Activated CD8-positive, alpha-beta memory T cell treated with anti-CD3 and anti-CD28 coated beads, Interleukin-2, amount 10 ng/mL, durations not matched to agents 7 days and 5 days (primary cell): ENCODE measurements at regions of chr7 and their contacts with region 1.

Region 1: GRCh38 chr7:104923010-104923421 is 91.0 kb upstream of the KMT2E start:
- DNase-seq: peak; percentile 89
- ATAC-seq: peak; percentile 99
- H3K4me3 Mint-ChIP-seq: no peak overlapping the region
- H3K27ac Mint-ChIP-seq: peak overlapping the region; percentile 73
- H3K4me1 Mint-ChIP-seq: peaks cover 7% of the 10 kb centered on the region
- H3K27me3 Mint-ChIP-seq: peaks cover 3% of the 10 kb centered on the region

Region 2: DNA sequence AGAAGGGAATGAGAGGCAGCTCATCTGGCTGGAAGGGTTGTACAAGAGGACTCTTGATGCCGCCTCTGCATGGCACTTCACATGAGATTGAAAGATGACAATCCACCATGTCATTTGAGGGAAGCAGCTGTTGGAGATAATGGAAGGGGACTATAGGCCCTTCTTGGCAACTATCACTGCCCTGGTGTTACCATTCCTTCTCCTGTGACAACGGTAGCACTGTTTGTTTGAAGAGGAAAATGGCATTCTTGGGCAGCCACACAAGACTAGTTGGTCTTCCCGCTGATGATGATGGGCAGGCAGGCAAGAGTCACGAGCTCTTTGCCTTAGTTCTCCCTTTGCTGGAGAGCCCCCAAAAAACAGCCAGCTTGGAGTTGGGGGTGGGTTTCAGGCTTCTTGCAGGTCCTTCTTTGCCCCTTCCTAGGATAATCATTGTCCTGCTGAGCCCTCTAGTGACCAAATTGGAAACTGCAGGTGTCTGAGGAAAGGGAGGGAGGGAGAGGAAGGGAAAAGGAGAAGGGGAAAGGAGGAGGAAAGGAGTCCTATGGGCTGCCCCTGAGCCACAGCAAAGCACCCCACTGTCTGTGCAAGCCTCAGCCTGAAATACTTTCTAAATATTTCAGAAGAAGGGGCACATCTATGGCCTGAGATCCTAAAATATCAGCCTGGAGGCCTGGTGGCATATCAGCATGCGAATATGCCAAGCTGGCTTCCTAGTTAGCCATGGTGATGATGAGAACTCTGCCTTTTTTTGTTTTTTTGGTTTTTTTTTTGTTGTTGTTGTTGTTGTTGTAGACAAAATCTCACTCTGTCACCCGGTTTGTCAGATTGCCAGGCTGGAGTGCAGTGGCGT is 74.7 kb before region 1 on chr7:
- CTCF ChIA-PET with region 1: interaction called, 11 read pairs
- DNase-seq: peak; percentile 61
- ATAC-seq: peak; percentile 55
- H3K4me3 Mint-ChIP-seq: no peak overlapping the region
- H3K27ac Mint-ChIP-seq: no peak overlapping the region
- H3K4me1 Mint-ChIP-seq: no peaks in the 10 kb centered on the region
- H3K27me3 Mint-ChIP-seq: peaks cover 24% of the 10 kb centered on the region

Region 3: GRCh38 chr7:104883718-104884452 is 39.1 kb before region 1 on chr7:
- CTCF ChIA-PET with region 1: interaction called, 103 read pairs
- DNase-seq: peak; percentile 74
- ATAC-seq: peak; percentile 86
- H3K4me3 Mint-ChIP-seq: no peak overlapping the region
- H3K27ac Mint-ChIP-seq: no peak overlapping the region
- H3K4me1 Mint-ChIP-seq: peaks cover 12% of the 10 kb centered on the region
- H3K27me3 Mint-ChIP-seq: peaks cover 3% of the 10 kb centered on the region

Region 4: GRCh38 chr7:104908636-104909035 is 14.4 kb before region 1 on chr7:
- CTCF ChIA-PET with region 1: interaction called, 16 read pairs
- DNase-seq: no peak
- ATAC-seq: no peak
- H3K4me3 Mint-ChIP-seq: no peak overlapping the region
- H3K27ac Mint-ChIP-seq: no peak overlapping the region
- H3K4me1 Mint-ChIP-seq: peaks cover 2% of the 10 kb centered on the region
- H3K27me3 Mint-ChIP-seq: peaks cover 23% of the 10 kb centered on the region

Region 5: DNA sequence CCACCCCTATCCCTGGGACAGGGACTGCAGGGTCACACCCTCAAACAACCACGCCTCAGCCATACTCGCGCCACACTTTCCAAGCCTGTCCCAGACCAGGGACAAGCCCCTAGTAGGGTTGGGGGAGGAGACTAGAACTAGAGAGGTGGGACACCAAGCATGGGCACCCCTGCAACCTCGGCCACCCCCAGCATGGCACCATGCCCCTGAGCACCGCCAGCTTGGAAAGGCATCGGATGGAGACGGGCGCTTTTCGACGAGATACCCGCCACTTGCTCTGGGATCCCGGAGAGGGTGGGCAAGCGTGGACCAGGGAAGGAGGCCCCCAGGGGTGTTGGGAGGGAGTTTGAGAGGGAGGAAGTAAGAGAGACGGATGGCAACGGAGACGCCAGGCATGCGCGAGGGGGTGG is 77.9 kb after region 1 on chr7:
- CTCF ChIA-PET with region 1: no interaction called
- DNase-seq: no peak
- ATAC-seq: no peak
- H3K4me3 Mint-ChIP-seq: no peak overlapping the region
- H3K27ac Mint-ChIP-seq: no peak overlapping the region
- H3K4me1 Mint-ChIP-seq: peaks cover 68% of the 10 kb centered on the region
- H3K27me3 Mint-ChIP-seq: no peaks in the 10 kb centered on the region

Region 6: GRCh38 chr7:105096306-105096705 is 173.3 kb after region 1 on chr7:
- CTCF ChIA-PET with region 1: no interaction called
- DNase-seq: no peak
- ATAC-seq: no peak
- H3K4me3 Mint-ChIP-seq: no peak overlapping the region
- H3K27ac Mint-ChIP-seq: no peak overlapping the region
- H3K4me1 Mint-ChIP-seq: peaks cover 34% of the 10 kb centered on the region
- H3K27me3 Mint-ChIP-seq: no peaks in the 10 kb centered on the region